Thyroid gland (tissue), 4 donors: ENCODE measurements at regions of chr15 and their contacts with region 1.

Region 1: GRCh38 chr15:74956648-74957300 is at the start of gene RPP25:
- DNase-seq: peak; percentile 78 to 84
- H3K4me3 ChIP-seq: peak within 1 kb of the TSS; percentile 34 to 90 (median 75)
- H3K27ac ChIP-seq: peak within 1 kb of the TSS; percentile 88 to 97 (median 92)
- H3K4me1 ChIP-seq: peaks cover 55 to 63% of the 10 kb centered on the region in 2 donors
- H3K27me3 ChIP-seq: no peaks in the 10 kb centered on the region
- CTCF ChIP-seq: no peak
- POLR2A ChIP-seq: peak; percentile 46 to 83
- total RNA-seq, gene RPP25: 14.2 to 23.1 (median 16.4) TPM

Region 2: DNA sequence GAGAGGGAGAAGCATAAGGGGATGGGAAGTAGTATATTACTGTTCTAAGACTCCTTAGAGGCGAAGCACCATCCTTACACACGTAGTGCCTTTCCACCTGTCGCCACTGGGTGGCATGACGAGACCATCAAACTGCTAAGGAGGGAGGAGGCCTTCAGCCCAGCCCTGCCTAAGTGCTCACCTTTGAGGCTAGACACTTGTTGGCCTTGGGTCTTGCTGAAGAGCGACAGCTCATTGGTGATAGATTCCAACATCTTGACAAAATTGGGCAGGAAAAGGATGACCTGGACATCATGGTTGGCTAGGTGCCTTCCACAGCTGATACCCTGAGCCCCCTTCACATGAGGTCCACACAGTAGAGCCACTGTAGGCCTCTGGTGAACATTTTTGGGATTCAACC is 321.5 kb before region 1 on chr15:
- intact Hi-C with region 1: loop called (anchors 5 kb)
- DNase-seq: peak; percentile 64 to 73
- H3K4me3 ChIP-seq: no peak overlapping the region
- H3K27ac ChIP-seq: no peak overlapping the region
- H3K4me1 ChIP-seq: no peaks in the 10 kb centered on the region
- H3K27me3 ChIP-seq: no peaks in the 10 kb centered on the region
- CTCF ChIP-seq: peak; percentile 78 to 97 (median 85)
- POLR2A ChIP-seq: no peak

Region 3: DNA sequence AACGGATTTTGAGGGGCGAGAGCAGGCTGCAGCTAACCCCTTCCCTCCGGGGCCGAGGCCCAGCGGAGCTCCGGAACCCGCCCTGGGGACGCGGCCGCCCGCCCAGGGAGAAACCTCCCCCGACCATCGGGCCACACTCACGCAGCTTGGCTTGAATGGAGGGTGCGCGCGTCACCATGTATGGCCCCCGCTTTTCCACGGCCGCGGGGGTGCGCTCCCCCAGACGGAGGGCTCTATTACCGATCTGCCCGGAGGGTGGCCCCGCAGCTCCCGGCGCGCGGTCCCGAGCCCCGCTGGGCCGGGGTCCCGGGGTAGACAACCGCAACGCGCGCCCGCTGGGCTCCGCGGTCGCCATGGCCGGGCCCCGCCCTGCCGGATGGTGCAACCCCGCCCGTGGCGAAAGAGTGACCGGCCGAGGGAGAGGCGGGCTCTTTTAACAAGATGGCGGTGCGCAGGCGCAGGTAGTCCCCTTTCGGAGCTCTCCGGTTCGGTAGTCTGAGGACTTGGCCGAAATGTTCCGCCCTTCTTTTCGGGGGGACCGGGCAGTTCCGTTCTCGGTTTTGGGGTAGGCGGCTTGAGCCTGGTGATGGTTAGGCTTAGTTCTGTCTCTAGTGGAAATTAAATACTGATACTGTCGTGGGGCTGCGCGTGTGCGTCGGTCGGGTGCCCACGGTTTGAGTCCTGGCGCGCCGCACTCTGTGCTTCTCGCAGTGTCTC is 50.2 kb before region 1 on chr15 and contains the start of gene FAM219B:
- intact Hi-C with region 1: loop called (anchors 10 kb)
- DNase-seq: peak; percentile 93 to 96
- H3K4me3 ChIP-seq: peak within 1 kb of the TSS; percentile 21 to 98 (median 96)
- H3K27ac ChIP-seq: peak within 1 kb of the TSS; percentile 87 to 97 (median 93)
- H3K4me1 ChIP-seq: peaks cover 10 to 20% of the 10 kb centered on the region in 2 donors
- H3K27me3 ChIP-seq: no peaks in the 10 kb centered on the region
- CTCF ChIP-seq: no peak
- POLR2A ChIP-seq: peak; percentile 64 to 93
- total RNA-seq, gene FAM219B: 72.1 to 136 (median 88.2) TPM